ENCODE measurements at regions of chr17 and their contacts with region 1.

Region 1: DNA sequence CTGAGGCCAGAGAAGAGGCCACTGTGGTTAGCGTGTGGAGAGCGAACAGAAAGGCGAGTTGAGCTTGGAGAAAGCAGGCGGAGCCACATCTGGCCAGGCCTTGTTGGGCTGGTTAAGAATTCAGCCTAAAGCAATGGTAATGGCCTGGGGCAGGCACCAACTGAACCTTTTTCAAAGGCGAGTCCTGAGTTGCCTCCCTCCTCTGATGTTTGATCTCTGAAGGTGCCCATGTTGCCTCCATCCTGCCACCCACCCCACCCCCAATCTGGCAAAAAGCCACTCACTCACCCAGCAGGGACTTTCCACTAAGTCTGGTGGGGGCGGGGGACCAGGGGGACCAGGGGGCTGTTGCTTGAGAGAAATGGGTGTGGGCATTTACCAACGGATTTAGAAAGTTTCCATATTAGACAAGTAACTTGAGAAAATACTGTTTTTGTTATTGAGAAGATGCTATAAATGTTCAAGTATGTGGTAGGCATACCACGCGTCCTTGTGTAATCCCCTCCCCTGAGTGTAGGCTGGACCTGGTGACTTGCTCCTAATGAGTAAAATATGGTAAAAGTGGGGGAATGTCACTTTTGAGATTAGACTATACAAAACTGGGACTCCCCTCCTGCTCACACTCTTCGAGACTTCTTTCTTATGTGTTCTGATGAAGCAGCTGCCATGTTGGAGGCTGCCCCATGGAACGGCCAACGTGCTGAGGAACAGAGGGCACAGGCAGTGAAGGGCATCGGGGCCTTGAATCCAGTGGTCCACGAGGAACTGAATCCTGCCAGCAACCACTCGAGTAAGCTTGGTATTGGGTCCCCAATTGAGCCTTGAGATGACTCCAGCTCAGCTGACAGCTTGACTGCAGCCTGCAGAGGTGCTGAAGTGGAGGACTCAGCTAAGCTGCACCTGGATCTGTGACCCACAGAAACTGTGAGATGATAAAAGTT is 29.9 kb upstream of the TNS4 start:
- DNase-seq: no peak
- ATAC-seq: no peak
- H3K4me3 ChIP-seq: no peak overlapping the region
- H3K27ac ChIP-seq: peak overlapping the region; percentile 49
- H3K4me1 ChIP-seq: peaks cover 28% of the 10 kb centered on the region
- H3K27me3 ChIP-seq: no peaks in the 10 kb centered on the region
- CTCF ChIP-seq: no peak

Region 2: DNA sequence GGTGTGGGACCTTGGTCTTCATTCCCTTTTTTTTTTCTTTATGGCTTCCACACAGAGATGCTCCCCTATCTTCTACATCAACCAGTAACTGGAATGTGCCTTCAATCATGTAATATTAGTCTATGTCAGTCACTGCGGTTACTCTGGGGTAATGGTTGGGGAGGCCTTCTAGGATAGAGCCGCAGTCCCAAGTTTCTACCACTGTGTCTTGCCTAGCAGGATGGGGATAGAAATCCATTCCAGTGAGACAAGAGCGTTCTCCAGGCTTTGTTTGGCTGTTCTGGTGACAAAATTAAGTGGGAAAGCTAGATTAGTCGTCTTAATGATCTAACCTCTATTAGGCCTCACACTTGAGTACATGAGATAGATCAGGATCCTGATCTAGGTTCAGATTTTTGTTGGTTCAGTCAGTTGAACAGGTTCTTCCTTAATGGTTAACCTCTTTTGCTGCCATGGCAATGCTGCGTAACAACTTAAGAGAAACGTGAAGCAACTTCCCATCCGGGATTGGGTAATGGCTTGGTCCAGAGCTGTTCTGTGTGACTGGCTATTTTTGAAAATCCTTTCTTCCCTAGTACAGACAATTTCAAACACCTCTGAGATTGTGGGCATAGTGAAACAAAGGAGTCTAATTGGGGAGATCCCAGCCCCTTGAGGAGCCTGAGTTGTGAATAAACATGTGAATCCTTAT is 400.8 kb before region 1 on chr17:
- CTCF ChIA-PET with region 1: no interaction called
- POLR2A ChIA-PET with region 1: no interaction called
- intact Hi-C with region 1: no loop called
- DNase-seq: no peak
- ATAC-seq: no peak
- H3K4me3 ChIP-seq: no peak overlapping the region
- H3K27ac ChIP-seq: no peak overlapping the region
- H3K4me1 ChIP-seq: no peaks in the 10 kb centered on the region
- H3K27me3 ChIP-seq: no peaks in the 10 kb centered on the region
- CTCF ChIP-seq: no peak

Region 3: DNA sequence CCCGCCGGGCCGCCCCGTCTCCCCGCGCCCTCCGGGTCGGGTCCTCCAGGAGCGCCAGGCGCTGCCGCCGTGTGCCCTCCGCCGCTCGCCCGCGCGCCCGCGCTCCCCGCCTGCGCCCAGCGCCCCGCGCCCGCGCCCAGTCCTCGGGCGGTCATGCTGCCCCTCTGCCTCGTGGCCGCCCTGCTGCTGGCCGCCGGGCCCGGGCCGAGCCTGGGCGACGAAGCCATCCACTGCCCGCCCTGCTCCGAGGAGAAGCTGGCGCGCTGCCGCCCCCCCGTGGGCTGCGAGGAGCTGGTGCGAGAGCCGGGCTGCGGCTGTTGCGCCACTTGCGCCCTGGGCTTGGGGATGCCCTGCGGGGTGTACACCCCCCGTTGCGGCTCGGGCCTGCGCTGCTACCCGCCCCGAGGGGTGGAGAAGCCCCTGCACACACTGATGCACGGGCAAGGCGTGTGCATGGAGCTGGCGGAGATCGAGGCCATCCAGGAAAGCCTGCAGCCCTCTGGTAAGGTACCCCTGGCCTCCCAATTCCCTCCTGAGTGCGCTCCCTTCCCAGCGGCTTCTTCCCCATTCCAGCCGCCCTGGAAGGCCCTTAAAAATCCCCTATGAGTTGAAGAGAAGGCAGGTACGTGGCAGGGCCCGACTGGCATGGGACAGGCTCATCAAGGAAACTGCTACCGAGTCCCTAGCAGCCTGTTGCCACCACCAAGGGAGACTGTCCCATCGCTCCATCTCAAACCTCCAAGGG is 87.6 kb before region 1 on chr17:
- CTCF ChIA-PET with region 1: interaction called, 6 read pairs
- POLR2A ChIA-PET with region 1: interaction called, 10 read pairs
- intact Hi-C with region 1: loop called (anchors 1 kb)
- DNase-seq: peak; percentile 62
- ATAC-seq: peak; percentile 60
- H3K4me3 ChIP-seq: peak overlapping the region; percentile 93
- H3K27ac ChIP-seq: no peak overlapping the region
- H3K4me1 ChIP-seq: peaks cover 18% of the 10 kb centered on the region
- H3K27me3 ChIP-seq: no peaks in the 10 kb centered on the region
- CTCF ChIP-seq: peak; percentile 38

Region 4: GRCh38 chr17:40475234-40475908 is 56.0 kb before region 1 on chr17:
- CTCF ChIA-PET with region 1: interaction called, 17 read pairs
- POLR2A ChIA-PET with region 1: no interaction called
- intact Hi-C with region 1: no loop called
- DNase-seq: peak; percentile 7
- ATAC-seq: no peak
- H3K4me3 ChIP-seq: no peak overlapping the region
- H3K27ac ChIP-seq: no peak overlapping the region
- H3K4me1 ChIP-seq: peaks cover under 1% of the 10 kb centered on the region; the same call in 1 of the 2 replicates
- H3K27me3 ChIP-seq: no peaks in the 10 kb centered on the region
- CTCF ChIP-seq: no peak

Region 5: DNA sequence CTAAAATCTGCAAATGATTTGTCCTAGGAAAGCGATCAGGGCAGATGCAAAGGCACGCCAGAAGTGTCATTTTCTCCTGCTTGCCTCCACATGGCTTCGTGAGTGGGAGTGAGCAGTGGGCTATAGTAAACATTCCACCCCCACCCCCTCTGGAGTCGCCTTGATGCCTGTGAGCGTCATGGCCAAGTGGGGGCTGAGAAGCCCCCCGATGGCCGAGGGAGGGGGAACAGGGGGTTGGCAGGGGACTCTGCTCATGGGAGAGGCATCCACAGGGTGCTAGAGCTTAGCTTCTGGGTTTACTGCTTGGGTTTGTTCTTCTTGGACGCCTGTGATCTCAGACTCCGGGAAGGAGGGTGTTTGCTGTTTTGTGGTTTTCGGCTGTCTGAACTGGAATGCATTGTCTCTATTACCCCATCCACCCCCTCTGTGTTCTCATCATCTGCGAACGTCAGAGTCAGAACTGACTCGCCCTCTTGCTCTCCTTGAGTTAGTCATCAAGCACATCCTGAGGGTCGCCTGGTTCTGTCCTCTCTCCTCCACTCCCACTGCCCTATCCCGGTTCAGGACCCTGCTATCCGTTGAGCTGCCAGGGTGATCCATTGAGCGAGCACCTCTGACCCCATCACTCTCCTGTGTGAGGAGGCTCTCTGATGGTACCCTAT is 45.3 kb before region 1 on chr17:
- CTCF ChIA-PET with region 1: interaction called, 4 read pairs
- POLR2A ChIA-PET with region 1: no interaction called
- intact Hi-C with region 1: loop called (anchors 5 kb)
- DNase-seq: peak; percentile 91
- ATAC-seq: peak; percentile 78
- H3K4me3 ChIP-seq: no peak overlapping the region
- H3K27ac ChIP-seq: peak overlapping the region; percentile 99
- H3K4me1 ChIP-seq: peaks cover 66% of the 10 kb centered on the region
- H3K27me3 ChIP-seq: no peaks in the 10 kb centered on the region
- CTCF ChIP-seq: no peak

Region 6: GRCh38 chr17:40496168-40496567 is 35.2 kb before region 1 on chr17:
- CTCF ChIA-PET with region 1: no interaction called
- POLR2A ChIA-PET with region 1: no interaction called
- intact Hi-C with region 1: no loop called
- DNase-seq: no peak
- ATAC-seq: no peak
- H3K4me3 ChIP-seq: peak overlapping the region; percentile 81
- H3K27ac ChIP-seq: 0 out of 2 replicates have a peak overlapping the region, but pooled peaks have one; percentile 7
- H3K4me1 ChIP-seq: peaks cover 47% of the 10 kb centered on the region
- H3K27me3 ChIP-seq: no peaks in the 10 kb centered on the region
- CTCF ChIP-seq: no peak

Region 7: DNA sequence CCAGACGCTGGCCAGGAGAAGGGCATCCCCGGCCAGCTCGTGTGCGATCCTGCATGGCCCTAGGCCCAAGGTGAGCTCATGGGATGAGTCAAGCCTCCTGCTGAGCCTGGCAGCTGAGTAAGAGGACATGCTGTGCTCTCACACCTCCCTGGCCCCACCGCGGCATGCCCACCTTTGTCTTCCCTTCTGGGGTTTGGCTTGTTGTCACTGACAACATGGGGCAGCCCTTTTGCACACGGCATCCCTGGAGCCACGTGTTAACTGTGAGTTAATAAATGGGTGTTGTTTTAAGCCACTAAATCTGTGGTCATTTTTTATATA is 21.0 kb before region 1 on chr17:
- CTCF ChIA-PET with region 1: no interaction called
- POLR2A ChIA-PET with region 1: no interaction called
- intact Hi-C with region 1: no loop called
- DNase-seq: peak; percentile 87
- ATAC-seq: peak; percentile 94
- H3K4me3 ChIP-seq: no peak overlapping the region
- H3K27ac ChIP-seq: peak overlapping the region; percentile 91
- H3K4me1 ChIP-seq: peaks cover 43% of the 10 kb centered on the region
- H3K27me3 ChIP-seq: no peaks in the 10 kb centered on the region
- CTCF ChIP-seq: no peak

Measured in PC-3 (cell line).